ENCODE measurements at regions of chr15 and their contacts with region 1.

Region 1: DNA sequence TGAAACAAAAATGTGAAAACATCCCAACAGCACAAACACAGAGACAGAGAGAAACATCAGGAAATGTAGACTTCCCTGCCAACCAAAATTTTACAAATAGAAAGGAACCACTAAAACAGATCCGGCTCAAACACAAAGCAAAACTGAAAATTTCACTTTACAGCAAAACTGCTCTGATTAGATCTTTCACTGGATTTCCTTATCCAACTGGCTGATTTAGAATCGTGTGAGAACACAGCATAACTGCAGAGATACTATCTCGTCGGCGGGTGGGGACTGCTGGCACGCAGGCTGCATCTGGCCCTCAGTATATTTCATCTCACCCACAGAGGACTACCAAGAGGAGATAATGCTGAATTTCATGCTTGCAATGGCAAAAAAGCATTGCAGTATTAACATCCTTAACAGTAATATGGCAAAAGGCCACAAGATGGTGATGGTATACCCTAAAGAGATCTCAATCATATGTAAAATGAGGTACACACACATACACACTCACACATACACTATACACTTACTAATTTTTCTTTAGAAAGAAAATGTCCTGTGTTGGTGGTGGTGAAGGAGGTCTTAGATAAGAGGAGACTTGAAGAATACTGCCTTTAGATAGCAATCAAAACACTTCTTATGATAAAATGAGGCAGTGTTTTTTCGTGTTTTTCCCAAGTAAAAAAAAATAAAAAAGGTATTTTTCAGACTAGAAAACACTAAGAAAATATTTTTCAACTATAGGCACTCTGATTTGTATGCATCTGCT is 10.6 kb upstream of the LEO1 start:
- DNase-seq: no peak

Region 2: GRCh38 chr15:52078876-52079700 is 96.9 kb after region 1 on chr15:
- intact Hi-C with region 1: loop called (anchors 5 kb)
- DNase-seq: peak; percentile 82

Region 3: GRCh38 chr15:52139599-52140491 is 157.7 kb after region 1 on chr15:
- intact Hi-C with region 1: loop called (anchors 5 kb)
- DNase-seq: no peak

Region 4: DNA sequence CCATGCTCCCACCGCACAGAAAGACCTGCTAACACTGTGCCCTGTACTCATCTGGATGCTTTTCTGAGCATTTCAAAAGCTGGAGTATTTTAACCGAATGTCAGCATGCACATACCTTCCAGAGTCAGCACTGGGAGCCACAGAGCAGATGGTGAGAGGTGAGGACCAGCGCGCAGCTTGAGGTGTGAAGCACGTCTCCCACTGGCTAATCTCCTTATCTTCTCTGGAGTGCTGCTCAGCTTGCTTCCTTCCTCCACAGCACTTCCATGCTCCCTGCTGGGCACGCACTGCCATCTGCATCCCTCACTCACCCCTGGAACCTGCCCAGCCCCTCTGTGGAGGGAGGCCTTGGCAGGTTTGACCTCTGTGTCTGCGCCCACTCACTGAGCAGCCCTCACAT is 209.0 kb after region 1 on chr15 and contains the start of gene GNB5:
- intact Hi-C with region 1: no loop called
- DNase-seq: no peak
- total RNA-seq, gene GNB5: 9.7 TPM

Measured in cardiac septum (tissue), 1 donor.